Heart right ventricle (tissue), 16 donors: ENCODE measurements at regions of chr1 and their contacts with region 1.

Region 1: DNA sequence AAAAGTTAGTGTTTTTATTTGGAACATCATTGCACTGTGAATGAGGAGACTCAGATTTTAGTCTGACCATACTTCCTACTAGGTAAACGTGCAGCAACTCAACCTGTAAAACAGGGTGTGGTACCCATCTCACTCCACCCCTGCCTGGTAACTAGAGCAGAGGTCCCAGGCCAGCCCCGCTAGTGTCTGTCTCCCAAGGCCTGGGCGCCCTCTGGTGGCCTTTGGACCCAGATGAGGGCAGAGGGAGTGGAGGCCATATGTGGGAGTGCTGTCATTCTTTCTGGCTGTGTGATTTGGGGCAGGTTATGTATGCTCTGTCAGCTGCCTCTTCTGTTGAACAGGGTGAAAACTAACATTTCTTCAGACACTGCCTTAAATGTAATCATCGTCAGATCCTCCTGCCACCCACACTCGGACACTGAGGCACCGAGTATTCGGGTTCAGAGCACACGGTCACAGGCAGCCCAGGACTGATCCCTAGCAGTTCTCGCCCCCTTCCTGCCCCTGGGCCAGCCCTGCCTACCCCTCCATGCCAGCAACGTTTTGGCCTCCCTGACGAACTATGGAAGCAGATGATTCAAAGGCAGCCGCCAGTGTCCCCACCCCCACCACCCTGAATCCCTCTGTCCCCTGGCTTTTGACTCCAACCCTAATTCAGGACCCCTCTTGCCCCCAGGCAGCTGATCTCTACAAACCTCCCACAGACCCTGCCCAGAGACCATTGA is 76.0 kb downstream of the CD247 start:
- DNase-seq: peak; percentile 83 to 87
- ATAC-seq: peak; percentile 88 to 97 (median 94)
- H3K4me3 ChIP-seq: no peak overlapping the region
- H3K27ac ChIP-seq: no peak overlapping the region
- H3K4me1 ChIP-seq: peaks cover 0 to 25% (median 9%) of the 10 kb centered on the region in 9 donors
- H3K27me3 ChIP-seq: peaks cover 0 to 33% (median 11%) of the 10 kb centered on the region in 7 donors
- CTCF ChIP-seq: peak; percentile 80 to 95 (median 91)

Region 2: DNA sequence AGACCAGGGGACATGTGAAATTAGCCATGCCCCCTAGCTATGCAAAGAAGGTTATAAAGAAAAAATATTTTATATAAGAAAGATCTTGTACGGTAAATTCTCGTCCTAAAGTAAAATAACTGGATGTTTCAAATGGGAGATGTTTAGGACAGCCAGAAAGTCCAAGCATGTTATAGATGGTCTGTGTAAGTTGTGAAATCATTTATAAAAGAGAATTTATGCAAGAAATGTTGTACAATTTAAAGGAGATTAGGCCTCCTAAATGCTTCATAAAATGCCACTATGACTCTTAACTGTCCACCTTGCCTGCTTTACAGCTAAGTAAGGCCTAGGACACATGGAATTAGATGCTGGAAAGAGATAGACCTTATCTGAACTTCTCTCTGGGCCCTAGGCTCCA is 721.1 kb before region 1 on chr1:
- intact Hi-C with region 1: no loop called
- DNase-seq: no peak
- ATAC-seq: no peak
- H3K4me3 ChIP-seq: no peak overlapping the region
- H3K27ac ChIP-seq: no peak overlapping the region
- H3K4me1 ChIP-seq: no peaks in the 10 kb centered on the region
- H3K27me3 ChIP-seq: no peaks in the 10 kb centered on the region
- CTCF ChIP-seq: no peak

Region 3: GRCh38 chr1:167066333-167067122 is 375.8 kb before region 1 on chr1:
- intact Hi-C with region 1: loop called (anchors 1 to 5 kb)
- DNase-seq: peak; percentile 66 to 82
- ATAC-seq: peak; percentile 85 to 94 (median 88)
- H3K4me3 ChIP-seq: peak overlapping the region in 7 of 10 donors; percentile 2 to 36 (median 24)
- H3K27ac ChIP-seq: no peak overlapping the region
- H3K4me1 ChIP-seq: peaks cover 0 to 12% (median 6%) of the 10 kb centered on the region in 9 donors
- H3K27me3 ChIP-seq: peaks cover 0 to 3% (median 0%) of the 10 kb centered on the region in 7 donors
- CTCF ChIP-seq: peak; percentile 87 to 98 (median 97)

Region 4: DNA sequence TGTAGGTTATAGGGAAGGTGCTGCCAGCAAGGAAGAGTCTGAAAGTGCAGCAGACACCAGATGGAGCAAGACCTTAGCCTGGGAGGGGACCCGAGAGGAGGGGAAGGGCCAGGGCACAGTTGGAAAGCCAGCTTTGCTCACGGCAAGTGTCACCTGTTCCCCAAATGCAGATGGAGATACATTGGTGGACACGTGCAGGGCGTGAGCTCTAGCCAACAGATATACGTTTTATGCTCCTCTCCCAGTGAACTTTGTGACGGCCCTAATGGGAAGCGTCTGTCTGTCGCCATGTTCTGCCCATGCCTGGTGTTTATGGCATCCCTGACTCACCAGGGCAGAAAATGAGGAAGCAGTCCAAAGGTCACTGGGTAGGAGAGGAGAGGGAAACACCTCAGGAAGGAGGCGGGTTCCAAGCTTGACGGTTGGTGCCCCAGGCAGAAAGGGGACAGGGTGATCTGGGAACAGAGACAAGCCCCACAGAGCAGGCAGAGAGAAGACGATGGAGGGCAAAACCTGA is 359.7 kb before region 1 on chr1:
- intact Hi-C with region 1: loop called in 1 of 10 experiments (anchors 5 kb)
- DNase-seq: no peak
- ATAC-seq: peak in 7 of 8 donors; percentile 15 to 62 (median 46)
- H3K4me3 ChIP-seq: no peak overlapping the region
- H3K27ac ChIP-seq: peak overlapping the region in 5 of 10 donors; percentile 22 to 70 (median 64)
- H3K4me1 ChIP-seq: peaks cover 0 to 58% (median 14%) of the 10 kb centered on the region in 9 donors
- H3K27me3 ChIP-seq: peaks cover 0 to 4% (median 0%) of the 10 kb centered on the region in 7 donors
- CTCF ChIP-seq: no peak

Region 5: GRCh38 chr1:167263819-167264464 is 178.3 kb before region 1 on chr1:
- intact Hi-C with region 1: loop called in 9 of 10 experiments (anchors 1 to 5 kb)
- DNase-seq: no peak
- ATAC-seq: peak in 2 of 8 donors; percentile 16 to 49
- H3K4me3 ChIP-seq: no peak overlapping the region
- H3K27ac ChIP-seq: peak overlapping the region in 1 of 10 donors; percentile 3
- H3K4me1 ChIP-seq: peaks cover 0 to 62% (median 44%) of the 10 kb centered on the region in 9 donors
- H3K27me3 ChIP-seq: no peaks in the 10 kb centered on the region
- CTCF ChIP-seq: no peak

Region 6: DNA sequence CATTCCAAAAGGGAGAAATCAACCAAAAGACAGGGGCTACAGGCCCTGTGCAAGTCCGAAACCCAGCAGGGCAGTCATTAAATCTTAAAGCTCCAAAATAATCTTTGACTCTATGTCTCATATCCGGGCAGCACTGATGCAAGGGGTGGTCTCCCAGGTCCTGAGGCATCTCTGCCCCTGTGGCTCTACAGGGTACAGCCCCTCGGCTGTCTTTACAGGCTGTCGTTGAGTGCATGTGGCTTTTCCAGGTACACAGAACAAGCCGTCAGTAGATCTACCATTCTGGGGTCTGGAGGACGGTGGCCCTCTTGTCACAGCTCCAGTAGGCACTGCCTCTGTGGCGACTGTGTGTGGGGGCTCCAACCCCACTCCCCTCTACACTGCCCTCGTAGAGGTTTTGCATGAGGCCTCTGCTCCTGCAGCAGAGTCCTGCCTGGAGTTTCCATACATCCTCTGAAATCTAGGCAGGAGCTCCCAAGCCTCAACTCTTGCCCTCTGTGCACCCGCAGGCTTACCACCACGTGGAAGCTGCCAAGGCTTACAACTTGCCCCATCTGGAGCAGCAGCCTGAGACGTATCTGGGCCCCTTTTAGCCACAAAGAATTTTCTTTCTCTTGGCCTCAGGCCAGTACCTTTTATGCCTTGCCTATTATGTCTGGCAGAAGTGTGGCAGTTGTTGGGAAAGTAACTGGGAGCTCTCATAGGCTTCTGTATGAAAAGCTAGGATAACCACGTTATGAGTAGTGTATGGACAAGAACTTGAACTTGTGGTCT is 169.1 kb before region 1 on chr1:
- intact Hi-C with region 1: loop called in 9 of 10 experiments (anchors 1 to 5 kb)
- DNase-seq: peak in 1 of 2 donors; percentile 8
- ATAC-seq: peak in 6 of 8 donors; percentile 28 to 69 (median 60)
- H3K4me3 ChIP-seq: no peak overlapping the region
- H3K27ac ChIP-seq: no peak overlapping the region
- H3K4me1 ChIP-seq: peaks cover 0 to 52% (median 23%) of the 10 kb centered on the region in 9 donors
- H3K27me3 ChIP-seq: no peaks in the 10 kb centered on the region
- CTCF ChIP-seq: no peak

Region 7: DNA sequence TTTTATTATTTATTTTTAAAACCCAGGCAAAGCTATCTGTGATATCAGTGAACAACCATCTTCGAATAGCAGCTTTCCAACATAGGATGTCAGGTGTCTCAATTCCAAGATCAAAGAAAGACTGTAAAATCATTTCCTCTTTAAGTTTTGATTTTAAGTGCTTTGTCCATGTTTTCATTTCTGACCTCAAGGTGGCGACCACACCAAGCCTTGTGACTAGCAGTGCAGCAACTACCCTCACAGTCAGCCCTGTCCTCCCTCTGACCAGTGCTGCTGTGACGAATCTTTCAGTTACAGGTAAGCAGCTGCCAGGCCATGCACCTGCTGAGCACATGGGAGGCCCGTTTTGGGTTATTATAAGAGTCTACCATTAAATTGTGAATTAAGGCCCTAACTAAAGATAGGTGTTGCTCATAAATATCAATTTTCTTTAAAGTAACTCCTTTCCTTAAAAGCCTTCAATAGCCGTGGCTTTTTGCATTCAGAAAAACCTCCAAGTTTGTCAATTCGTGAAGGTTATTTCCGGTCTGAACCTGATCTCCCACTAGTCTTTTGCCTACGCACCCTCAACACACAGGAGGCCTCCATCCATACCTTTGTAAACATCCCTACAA is 40.9 kb before region 1 on chr1:
- intact Hi-C with region 1: loop called in 2 of 10 experiments (anchors 5 kb)
- DNase-seq: peak in 1 of 2 donors; percentile 27
- ATAC-seq: peak in 3 of 8 donors; percentile 55
- H3K4me3 ChIP-seq: no peak overlapping the region
- H3K27ac ChIP-seq: no peak overlapping the region
- H3K4me1 ChIP-seq: peaks cover 0 to 10% (median 0%) of the 10 kb centered on the region in 9 donors
- H3K27me3 ChIP-seq: no peaks in the 10 kb centered on the region
- CTCF ChIP-seq: peak; percentile 16 to 67 (median 52)